ENCODE measurements at regions of chr19 and their contacts with region 1.

Region 1: GRCh38 chr19:18985257-18985656 is 44.2 kb upstream of the HOMER3 start:
- DNase-seq: no peak
- H3K4me3 ChIP-seq: no peak overlapping the region
- H3K27ac ChIP-seq: no peak overlapping the region
- H3K4me1 ChIP-seq: no peaks in the 10 kb centered on the region
- H3K27me3 ChIP-seq: no peaks in the 10 kb centered on the region; the same call in 1 of the 2 replicates
- CTCF ChIP-seq: no peak
- EP300 ChIP-seq: no peak
- RAD21 ChIP-seq: no peak

Region 2: GRCh38 chr19:18865973-18866799 is 119.1 kb before region 1 on chr19:
- CTCF ChIA-PET with region 1: interaction called, 13 read pairs
- POLR2A ChIA-PET with region 1: no interaction called
- DNase-seq: peak; percentile 98
- H3K4me3 ChIP-seq: peak overlapping the region in 1 of 2 experiments; percentile 53; a peak in 1 of 4 replicates
- H3K27ac ChIP-seq: no peak overlapping the region
- H3K4me1 ChIP-seq: no peaks in the 10 kb centered on the region
- H3K27me3 ChIP-seq: no peaks in the 10 kb centered on the region
- CTCF ChIP-seq: peak; percentile 99
- EP300 ChIP-seq: no peak
- RAD21 ChIP-seq: peak; percentile 74

Region 3: GRCh38 chr19:18906605-18907519 is 78.4 kb before region 1 on chr19:
- CTCF ChIA-PET with region 1: interaction called, 11 read pairs
- POLR2A ChIA-PET with region 1: no interaction called
- DNase-seq: no peak
- H3K4me3 ChIP-seq: no peak overlapping the region
- H3K27ac ChIP-seq: no peak overlapping the region
- H3K4me1 ChIP-seq: no peaks in the 10 kb centered on the region
- H3K27me3 ChIP-seq: no peaks in the 10 kb centered on the region
- CTCF ChIP-seq: no peak
- EP300 ChIP-seq: no peak
- RAD21 ChIP-seq: no peak

Region 4: DNA sequence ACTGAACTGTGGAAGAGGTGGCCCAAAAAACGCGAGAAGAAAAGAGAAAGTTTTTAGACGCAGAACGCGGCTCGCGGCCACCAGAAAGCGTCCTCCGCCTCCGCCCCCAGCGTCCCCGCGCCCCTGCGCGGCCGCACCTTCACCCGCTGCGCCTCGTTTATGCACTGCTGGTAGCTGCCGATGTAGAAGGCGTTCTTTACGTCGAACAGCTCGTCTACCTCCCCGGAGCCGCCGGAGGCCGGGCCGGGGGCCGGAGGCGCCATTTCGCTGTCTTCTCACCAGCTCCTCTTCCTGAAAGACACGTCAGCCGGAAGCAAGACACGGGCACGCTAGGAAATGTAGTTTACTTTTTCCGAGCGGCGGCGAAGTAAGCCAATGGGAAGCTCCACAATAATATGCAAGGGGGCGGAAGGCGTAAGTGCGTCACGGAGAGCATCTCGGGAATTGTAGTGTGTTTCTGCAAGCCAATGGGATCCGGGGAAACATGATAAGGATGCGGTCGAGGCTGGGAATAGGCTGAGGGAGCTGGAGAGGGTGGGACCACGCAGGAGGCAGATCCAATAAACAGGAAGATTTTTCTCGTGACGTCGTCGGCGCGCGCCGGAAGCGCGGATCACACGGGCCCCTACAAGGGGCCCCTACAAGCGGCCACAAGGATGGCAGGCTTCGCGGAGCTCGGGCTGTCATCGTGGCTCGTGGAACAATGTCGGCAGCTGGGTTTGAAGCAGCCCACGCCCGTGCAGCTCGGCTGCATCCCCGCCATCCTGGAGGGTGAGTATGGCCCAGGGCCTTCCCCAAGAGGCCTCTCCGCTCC is 66.0 kb before region 1 on chr19 and contains the starts of genes COPE and DDX49:
- CTCF ChIA-PET with region 1: interaction called, 12 read pairs
- POLR2A ChIA-PET with region 1: no interaction called
- DNase-seq: peak; percentile 98
- H3K4me3 ChIP-seq: peak within 1 kb of the TSS; percentile 89 to 92
- H3K27ac ChIP-seq: peak within 1 kb of the TSS; percentile 74 to 92
- H3K4me1 ChIP-seq: peaks cover 5 to 12% of the 10 kb centered on the region in 2 experiments; a peak in 2 of 4 replicates
- H3K27me3 ChIP-seq: no peaks in the 10 kb centered on the region
- CTCF ChIP-seq: no peak
- EP300 ChIP-seq: no peak
- RAD21 ChIP-seq: no peak
- polyA plus RNA-seq, gene COPE: 412 and 450 TPM in 2 replicates
- polyA plus RNA-seq, gene DDX49: 81.7 and 86.8 TPM in 2 replicates

Region 5: GRCh38 chr19:18943465-18943864 is 41.8 kb before region 1 on chr19:
- CTCF ChIA-PET with region 1: interaction called, 11 read pairs
- POLR2A ChIA-PET with region 1: no interaction called
- DNase-seq: no peak
- H3K4me3 ChIP-seq: no peak overlapping the region
- H3K27ac ChIP-seq: no peak overlapping the region
- H3K4me1 ChIP-seq: peaks cover 0 to 10% of the 10 kb centered on the region in 2 experiments; a peak in 1 of 4 replicates
- H3K27me3 ChIP-seq: no peaks in the 10 kb centered on the region
- CTCF ChIP-seq: no peak
- EP300 ChIP-seq: no peak
- RAD21 ChIP-seq: no peak

Region 6: GRCh38 chr19:18995804-18996241 is 10.6 kb after region 1 on chr19:
- CTCF ChIA-PET with region 1: interaction called, 19 read pairs
- POLR2A ChIA-PET with region 1: no interaction called
- DNase-seq: peak; percentile 70
- H3K4me3 ChIP-seq: no peak overlapping the region
- H3K27ac ChIP-seq: no peak overlapping the region
- H3K4me1 ChIP-seq: peaks cover 0 to 11% of the 10 kb centered on the region in 2 experiments; a peak in 1 of 4 replicates
- H3K27me3 ChIP-seq: no peaks in the 10 kb centered on the region
- CTCF ChIP-seq: peak; percentile 65
- EP300 ChIP-seq: no peak
- RAD21 ChIP-seq: peak; percentile 48

Region 7: GRCh38 chr19:19021115-19021514 is 35.9 kb after region 1 on chr19:
- CTCF ChIA-PET with region 1: no interaction called
- POLR2A ChIA-PET with region 1: no interaction called
- DNase-seq: no peak
- H3K4me3 ChIP-seq: no peak overlapping the region
- H3K27ac ChIP-seq: peak overlapping the region in 1 of 2 experiments; percentile 60; a peak in 2 of 4 replicates
- H3K4me1 ChIP-seq: peaks cover 0 to 5% of the 10 kb centered on the region in 2 experiments; a peak in 2 of 4 replicates
- H3K27me3 ChIP-seq: no peaks in the 10 kb centered on the region
- CTCF ChIP-seq: no peak
- EP300 ChIP-seq: no peak
- RAD21 ChIP-seq: no peak

Measured in SK-N-SH (cell line).